CD4-positive, alpha-beta memory T cell (primary cell): ENCODE measurements at regions of chr1 and their contacts with region 1.

Region 1: GRCh38 chr1:114558544-114558943 is 22.9 kb downstream of the BCAS2 start:
- DNase-seq: peak in 4 of 5 donors; percentile 18 to 28 (median 20)
- H3K4me3 ChIP-seq: no peak overlapping the region
- H3K4me3 Mint-ChIP-seq: no peak overlapping the region
- H3K27ac ChIP-seq: no peak overlapping the region
- H3K27ac Mint-ChIP-seq: no peak overlapping the region
- H3K4me1 ChIP-seq: no peaks in the 10 kb centered on the region
- H3K4me1 Mint-ChIP-seq: no peaks in the 10 kb centered on the region
- H3K27me3 ChIP-seq: no peaks in the 10 kb centered on the region
- H3K27me3 Mint-ChIP-seq: no peaks in the 10 kb centered on the region

Region 2: DNA sequence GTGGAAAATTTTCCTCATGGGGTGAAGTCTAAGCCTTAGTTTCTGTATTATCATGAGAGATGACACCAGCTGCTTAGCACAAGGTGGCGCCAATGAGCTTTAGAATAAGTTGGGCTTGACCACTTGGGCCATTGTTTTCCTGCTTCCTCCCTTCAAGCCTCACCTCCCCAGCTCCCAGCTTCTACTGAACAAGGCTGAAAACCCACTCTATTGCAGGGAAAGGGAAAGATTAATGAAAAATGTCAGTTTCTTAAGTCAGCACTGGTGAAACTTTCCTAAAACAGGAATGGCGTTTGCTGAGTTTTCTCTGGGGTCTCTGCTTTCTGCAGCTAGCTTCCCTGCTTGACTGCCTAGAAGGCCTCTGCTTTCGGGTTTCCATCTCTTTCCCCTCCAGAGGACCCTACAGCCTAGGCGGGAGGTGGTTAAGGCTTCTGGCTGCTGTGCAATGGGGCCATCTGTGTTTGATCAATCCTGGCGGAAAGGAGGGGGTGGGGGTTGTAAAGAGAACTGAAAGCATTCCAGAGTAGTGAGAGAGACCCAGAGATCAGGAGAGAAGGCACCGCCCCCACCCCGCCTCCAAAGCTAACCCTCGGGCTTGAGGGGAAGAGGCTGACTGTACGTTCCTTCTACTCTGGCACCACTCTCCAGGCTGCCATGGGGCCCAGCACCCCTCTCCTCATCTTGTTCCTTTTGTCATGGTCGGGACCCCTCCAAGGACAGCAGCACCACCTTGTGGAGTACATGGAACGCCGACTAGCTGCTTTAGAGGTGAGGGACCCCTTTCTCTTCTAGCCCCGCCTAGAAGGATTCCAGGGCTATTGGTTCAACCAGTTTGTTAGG is 579.5 kb before region 1 on chr1 and contains the start of gene OLFML3:
- CTCF ChIA-PET with region 1: interaction called, 3 read pairs
- POLR2A ChIA-PET with region 1: no interaction called
- intact Hi-C with region 1: loop called (anchors 5 kb)
- DNase-seq: peak in 3 of 5 donors; percentile 17 to 27 (median 22)
- H3K4me3 ChIP-seq: no peak within 1 kb of the TSS
- H3K4me3 Mint-ChIP-seq: peak within 1 kb of the TSS in 1 of 8 donors; percentile 17
- H3K27ac ChIP-seq: no peak within 1 kb of the TSS
- H3K27ac Mint-ChIP-seq: peak within 1 kb of the TSS in 5 of 7 donors; percentile 30 to 67 (median 50)
- H3K4me1 ChIP-seq: no peaks in the 10 kb centered on the region
- H3K4me1 Mint-ChIP-seq: peaks cover 11 to 41% (median 27%) of the 10 kb centered on the region in 4 donors
- H3K27me3 ChIP-seq: no peaks in the 10 kb centered on the region
- H3K27me3 Mint-ChIP-seq: no peaks in the 10 kb centered on the region
- total RNA-seq, gene OLFML3: 0.42 to 0.70 TPM